PC-3 (cell line): ENCODE measurements at regions of chr2 and their contacts with region 1.

Region 1: GRCh38 chr2:61658841-61659780 is 121.0 kb upstream of the XPO1 start:
- DNase-seq: peak; percentile 67
- ATAC-seq: peak; percentile 90
- H3K4me3 ChIP-seq: peak overlapping the region; percentile 56
- H3K27ac ChIP-seq: no peak overlapping the region
- H3K4me1 ChIP-seq: peaks cover 9% of the 10 kb centered on the region
- H3K27me3 ChIP-seq: no peaks in the 10 kb centered on the region
- CTCF ChIP-seq: peak; percentile 88

Region 2: DNA sequence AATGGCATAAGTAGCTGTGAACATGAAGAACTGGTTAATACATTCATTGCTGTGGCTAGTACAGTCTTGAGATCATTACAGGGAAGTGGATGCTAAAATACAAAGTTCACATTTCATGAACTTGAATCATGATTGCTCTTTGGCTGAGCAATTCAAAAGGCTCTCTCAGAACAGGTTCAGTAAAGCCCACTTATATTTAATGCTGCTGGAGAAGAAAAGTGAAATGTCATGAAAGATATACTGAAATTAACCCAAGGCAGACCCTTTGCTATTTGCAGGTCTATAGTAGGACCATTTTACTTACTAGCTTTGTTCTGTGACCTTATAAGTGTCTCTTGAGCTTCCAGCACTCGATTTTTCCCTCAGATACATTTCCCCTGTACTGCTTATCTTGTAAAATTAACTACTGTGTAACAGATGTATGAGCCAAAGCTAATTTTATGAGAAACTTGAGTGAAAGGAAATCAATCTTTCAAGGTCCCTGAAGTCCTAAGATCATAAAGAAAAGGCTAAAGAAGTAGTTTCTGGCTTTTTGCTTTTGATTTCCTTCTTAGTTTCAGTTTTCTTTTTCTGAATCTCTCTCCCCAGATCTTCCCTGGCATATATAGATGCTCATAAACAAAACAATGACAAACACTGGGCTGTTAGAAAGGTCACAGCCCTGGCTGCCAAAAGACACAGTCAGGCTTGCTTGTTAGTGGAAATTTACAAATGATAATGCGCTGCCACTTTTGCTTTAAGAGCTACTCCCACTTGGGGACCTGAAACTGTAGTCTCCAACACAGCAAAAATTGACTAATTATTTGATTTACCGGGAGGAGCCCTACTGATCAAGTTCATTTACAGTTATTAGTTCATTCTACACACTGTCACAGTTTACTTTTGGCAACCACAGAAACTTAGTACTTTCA is 11.7 kb after region 1 on chr2:
- CTCF ChIA-PET with region 1: interaction called, 15 read pairs
- POLR2A ChIA-PET with region 1: no interaction called
- intact Hi-C with region 1: no loop called
- DNase-seq: peak; percentile 56
- ATAC-seq: peak; percentile 80
- H3K4me3 ChIP-seq: peak overlapping the region; percentile 34
- H3K27ac ChIP-seq: peak overlapping the region; percentile 44
- H3K4me1 ChIP-seq: peaks cover 18% of the 10 kb centered on the region
- H3K27me3 ChIP-seq: no peaks in the 10 kb centered on the region
- CTCF ChIP-seq: no peak

Region 3: DNA sequence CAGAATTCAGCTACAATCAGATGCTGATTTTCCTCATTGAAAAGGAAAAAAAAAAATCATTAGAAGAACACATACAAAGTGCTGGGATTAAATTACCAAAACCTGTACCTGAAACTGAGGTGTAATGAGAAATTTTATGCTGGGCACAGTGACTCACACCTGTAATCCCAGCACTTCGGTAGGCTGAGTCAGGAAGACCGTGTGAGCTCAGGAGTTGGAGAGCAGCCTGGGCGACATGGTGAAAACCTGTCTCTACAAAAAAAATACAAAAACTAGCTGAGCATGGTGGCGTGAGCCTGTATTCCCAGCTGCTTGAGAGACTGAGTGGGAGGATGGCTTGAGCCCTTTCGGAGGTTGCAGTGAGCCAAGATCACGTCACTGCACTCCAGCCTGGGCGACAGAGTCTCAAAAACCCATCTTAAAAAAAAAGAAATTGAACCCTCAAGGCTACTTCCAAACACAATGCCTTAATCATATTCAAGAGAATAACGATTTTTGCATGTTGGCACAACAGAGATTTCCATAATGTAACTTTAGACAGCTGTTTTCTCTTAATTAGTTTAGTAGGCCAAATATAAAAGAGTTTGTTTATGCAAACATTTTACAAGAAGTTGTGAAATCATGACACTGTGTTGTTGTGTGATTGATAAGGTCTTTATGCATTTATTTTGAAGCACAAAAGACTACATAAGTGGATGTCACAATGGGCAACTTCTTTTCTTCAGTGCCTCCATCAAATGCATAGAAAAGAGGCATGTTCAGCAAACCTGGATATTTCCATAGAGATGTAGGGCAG is 130.9 kb after region 1 on chr2:
- CTCF ChIA-PET with region 1: no interaction called
- POLR2A ChIA-PET with region 1: no interaction called
- intact Hi-C with region 1: loop called (anchors 1 kb)
- DNase-seq: peak; percentile 64
- ATAC-seq: no peak
- H3K4me3 ChIP-seq: no peak overlapping the region
- H3K27ac ChIP-seq: no peak overlapping the region
- H3K4me1 ChIP-seq: peaks cover 7% of the 10 kb centered on the region
- H3K27me3 ChIP-seq: no peaks in the 10 kb centered on the region
- CTCF ChIP-seq: no peak

Region 4: DNA sequence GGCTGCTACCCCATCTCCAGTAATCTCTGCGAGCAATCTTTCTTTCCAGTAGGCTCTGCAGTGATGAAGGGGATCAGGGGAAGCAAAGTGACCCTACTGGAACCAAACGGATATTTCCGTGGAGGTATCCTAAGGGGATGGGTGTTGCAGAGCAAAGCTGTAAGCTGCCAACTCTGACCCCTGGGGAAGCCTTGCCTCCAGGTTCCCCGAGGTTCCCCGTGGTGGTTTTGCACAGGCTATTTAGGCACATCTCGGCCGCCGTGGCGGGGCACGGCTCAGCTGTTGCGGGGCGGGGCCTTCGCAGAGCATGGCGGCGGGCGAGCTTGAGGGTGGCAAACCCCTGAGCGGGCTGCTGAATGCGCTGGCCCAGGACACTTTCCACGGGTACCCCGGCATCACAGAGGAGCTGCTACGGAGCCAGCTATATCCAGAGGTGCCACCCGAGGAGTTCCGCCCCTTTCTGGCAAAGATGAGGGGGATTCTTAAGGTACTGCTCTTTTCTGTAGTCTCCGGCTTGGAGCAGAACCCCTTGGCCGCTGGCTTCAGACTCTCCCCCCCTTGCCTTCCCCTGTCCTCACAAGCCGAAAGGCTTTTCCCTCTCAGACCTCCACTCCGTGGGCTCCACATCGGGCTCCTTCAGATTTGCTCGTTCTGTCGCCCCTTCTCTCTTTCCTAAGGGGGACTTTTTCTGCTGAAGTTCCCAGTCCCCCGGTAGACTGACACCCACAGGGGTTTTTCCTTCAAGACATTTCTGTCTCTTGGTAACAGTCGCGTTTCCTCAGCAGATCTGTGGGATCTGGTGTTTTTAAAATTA is 246.5 kb after region 1 on chr2 and contains the start of gene COMMD1:
- CTCF ChIA-PET with region 1: no interaction called
- POLR2A ChIA-PET with region 1: no interaction called
- intact Hi-C with region 1: no loop called
- DNase-seq: peak; percentile 74
- ATAC-seq: peak; percentile 98
- H3K4me3 ChIP-seq: peak within 1 kb of the TSS; percentile 99
- H3K27ac ChIP-seq: no peak within 1 kb of the TSS
- H3K4me1 ChIP-seq: peaks cover 13% of the 10 kb centered on the region
- H3K27me3 ChIP-seq: no peaks in the 10 kb centered on the region
- CTCF ChIP-seq: no peak
- total RNA-seq, gene COMMD1: 30.8 and 31.7 TPM in 2 replicates